ENCODE measurements at regions of chr10 and their contacts with region 1.

Region 1: GRCh38 chr10:31864834-31865518 is 63.7 kb downstream of the ARHGAP12 start:
- DNase-seq: no peak
- ATAC-seq: no peak
- H3K4me3 ChIP-seq: no peak overlapping the region
- H3K4me3 Mint-ChIP-seq: no peak overlapping the region
- H3K27ac ChIP-seq: no peak overlapping the region
- H3K27ac Mint-ChIP-seq: peak overlapping the region in 1 of 2 donors; percentile 7
- H3K4me1 ChIP-seq: peaks cover 4% of the 10 kb centered on the region
- H3K4me1 Mint-ChIP-seq: peaks cover 25 to 31% of the 10 kb centered on the region in 2 donors
- H3K27me3 ChIP-seq: no peaks in the 10 kb centered on the region
- H3K27me3 Mint-ChIP-seq: no peaks in the 10 kb centered on the region
- CTCF ChIP-seq: no peak

Region 2: DNA sequence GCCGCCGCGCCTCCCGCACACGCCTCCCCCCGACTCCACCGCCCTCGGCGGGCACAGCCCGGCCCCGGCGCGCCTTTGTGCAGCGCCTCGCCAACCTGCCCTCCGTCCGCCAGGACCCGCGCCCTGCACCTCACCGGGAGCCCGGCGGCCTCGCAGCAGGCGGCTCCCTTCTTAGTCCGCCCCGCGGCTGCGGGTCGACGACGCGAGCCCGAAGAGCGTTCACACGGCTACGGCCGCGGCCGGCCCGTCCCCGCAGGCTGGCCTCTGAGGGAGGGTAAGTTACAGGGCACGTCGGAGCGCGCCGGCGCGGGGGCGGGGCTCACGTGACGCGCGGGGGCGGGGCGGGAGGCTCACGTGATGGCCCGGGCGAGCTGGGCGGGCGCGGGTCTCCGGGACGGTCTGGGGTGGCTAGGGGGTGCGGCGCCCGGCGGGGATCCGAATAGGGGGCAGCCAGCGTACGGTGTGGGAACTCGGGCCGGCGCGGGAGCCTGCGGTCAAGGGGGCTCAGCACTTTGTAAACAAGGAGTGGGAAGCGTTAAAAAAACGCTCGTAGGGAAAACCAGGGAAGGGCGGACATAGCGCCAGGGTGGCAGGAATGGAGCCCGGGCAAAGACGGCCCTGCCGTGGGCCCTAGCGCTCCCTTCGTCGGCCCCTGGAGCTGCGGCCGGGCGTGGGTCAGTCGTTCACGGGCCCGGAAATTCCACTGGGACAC is 63.7 kb after region 1 on chr10 and contains the start of gene ARHGAP12:
- intact Hi-C with region 1: loop called (anchors 5 kb)
- DNase-seq: peak; percentile 86 to 88
- ATAC-seq: peak; percentile 70 to 86 (median 80)
- H3K4me3 ChIP-seq: peak within 1 kb of the TSS; percentile 96
- H3K4me3 Mint-ChIP-seq: peak within 1 kb of the TSS; percentile 97
- H3K27ac ChIP-seq: peak within 1 kb of the TSS; percentile 73
- H3K27ac Mint-ChIP-seq: peak within 1 kb of the TSS; percentile 83 to 89
- H3K4me1 ChIP-seq: peaks cover 19% of the 10 kb centered on the region
- H3K4me1 Mint-ChIP-seq: peaks cover 63 to 64% of the 10 kb centered on the region in 2 donors
- H3K27me3 ChIP-seq: no peaks in the 10 kb centered on the region
- H3K27me3 Mint-ChIP-seq: no peaks in the 10 kb centered on the region
- CTCF ChIP-seq: no peak
- total RNA-seq, gene ARHGAP12: 35.1 to 40.2 (median 40.2) TPM

Region 3: GRCh38 chr10:32005050-32005449 is 140.1 kb after region 1 on chr10:
- intact Hi-C with region 1: loop called (anchors 1 kb)
- DNase-seq: peak in 1 of 2 donors; percentile 72
- ATAC-seq: peak; percentile 53 to 70 (median 61)
- H3K4me3 ChIP-seq: no peak overlapping the region
- H3K4me3 Mint-ChIP-seq: no peak overlapping the region
- H3K27ac ChIP-seq: no peak overlapping the region
- H3K27ac Mint-ChIP-seq: peak overlapping the region; percentile 31 to 54
- H3K4me1 ChIP-seq: no peaks in the 10 kb centered on the region
- H3K4me1 Mint-ChIP-seq: peaks cover 0 to 5% of the 10 kb centered on the region in 2 donors
- H3K27me3 ChIP-seq: no peaks in the 10 kb centered on the region
- H3K27me3 Mint-ChIP-seq: no peaks in the 10 kb centered on the region
- CTCF ChIP-seq: no peak

Measured in natural killer cell (primary cell).